ENCODE measurements at regions of chr10 and their contacts with region 1.

Region 1: DNA sequence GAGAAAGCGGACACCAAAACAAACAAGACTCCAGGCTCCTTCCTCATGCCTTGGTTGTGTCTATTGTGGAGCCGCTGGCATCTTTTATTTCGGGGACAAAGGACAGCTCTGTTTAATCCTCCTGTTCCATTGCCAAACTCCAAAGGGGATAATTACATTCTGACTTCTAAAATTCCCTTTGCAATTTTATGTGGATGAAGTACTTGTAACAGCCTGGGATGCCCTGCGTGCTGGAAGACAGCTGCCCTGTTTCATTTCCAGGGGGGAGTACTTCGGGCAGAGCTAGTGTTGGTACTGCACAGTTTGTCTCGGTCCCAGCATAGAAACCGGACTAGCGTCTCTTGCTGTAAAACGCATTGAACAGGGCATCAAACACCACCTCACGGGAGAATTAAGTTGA is 90.9 kb downstream of the BAMBI start:
- DNase-seq: peak in 3 of 10 donors; percentile 42 to 60 (median 46)
- H3K4me3 ChIP-seq: peak overlapping the region in 39 of 59 donors; percentile 1 to 51 (median 20)
- H3K27ac ChIP-seq: peak overlapping the region in 50 of 59 donors; percentile 1 to 86 (median 68)
- H3K27me3 ChIP-seq: no peaks in the 10 kb centered on the region
- CTCF ChIP-seq: peak in 2 of 56 donors; percentile 9 to 23

Region 2: DNA sequence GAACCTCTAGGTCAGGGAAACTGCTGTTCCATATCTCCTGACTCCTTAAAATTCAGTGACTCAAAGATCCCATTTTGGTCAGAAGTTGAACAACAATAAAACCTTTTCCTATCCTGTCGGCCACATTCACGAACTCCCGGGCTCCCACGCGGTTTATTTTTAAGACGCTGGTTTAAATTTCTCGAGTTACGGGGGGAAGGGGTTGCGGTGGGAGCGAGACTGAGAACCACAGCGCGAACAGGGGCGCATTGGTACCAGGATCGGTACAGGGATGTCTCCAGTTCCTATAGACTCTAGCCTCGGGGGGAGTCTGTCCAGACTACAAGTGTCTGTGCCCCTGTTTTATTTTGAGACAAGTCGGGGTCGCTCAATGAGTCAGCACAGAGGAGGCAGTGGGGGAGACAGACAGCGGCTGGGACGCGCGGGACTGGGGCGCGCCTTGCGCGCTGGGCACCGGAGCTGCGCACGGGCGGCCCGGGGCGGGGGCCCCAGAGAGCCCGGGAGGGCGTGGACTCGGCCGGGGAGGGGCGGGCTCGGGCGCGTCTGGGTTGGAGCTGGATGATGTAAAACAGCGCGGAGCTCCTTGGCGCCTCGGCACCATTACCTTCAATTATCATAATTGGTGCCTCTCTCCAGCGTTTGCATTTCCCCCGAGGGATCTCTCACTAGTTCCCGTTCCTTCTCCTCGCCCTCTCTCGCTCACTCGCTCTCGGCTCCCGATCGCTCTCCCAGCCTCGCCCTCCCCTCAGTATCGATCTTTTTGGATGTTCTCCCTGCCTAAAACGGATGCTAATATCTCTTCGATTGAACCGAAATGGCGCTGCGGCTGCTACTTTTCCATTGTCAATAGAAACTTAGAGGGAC is 99.6 kb before region 1 on chr10:
- intact Hi-C with region 1: no loop called
- DNase-seq: no peak
- H3K4me3 ChIP-seq: peak overlapping the region; percentile 16 to 71 (median 51)
- H3K27ac ChIP-seq: no peak overlapping the region
- H3K27me3 ChIP-seq: peaks cover 0 to 63% (median 35%) of the 10 kb centered on the region in 45 donors
- CTCF ChIP-seq: no peak

Region 3: DNA sequence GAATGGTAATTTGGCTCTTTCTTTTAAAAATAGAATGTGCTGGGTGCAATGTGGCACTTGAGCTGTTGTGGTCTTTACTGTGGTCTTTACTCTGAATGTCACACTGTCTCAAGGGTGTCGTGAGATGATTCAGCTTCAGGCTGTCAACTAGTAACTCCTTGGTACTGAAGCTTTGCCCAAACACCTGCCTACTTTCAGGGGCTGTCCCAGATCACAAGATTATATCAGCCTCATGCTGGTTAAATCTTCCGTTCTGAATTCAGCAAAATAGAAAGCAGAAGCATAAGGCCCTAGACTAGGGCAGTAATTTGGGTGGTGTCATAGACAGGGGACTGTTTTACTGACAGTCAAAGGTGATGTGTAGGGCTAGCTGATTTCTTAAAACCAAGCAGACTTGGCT is 20.0 kb after region 1 on chr10:
- intact Hi-C with region 1: loop called in 1 of 2 experiments (anchors 1 kb)
- DNase-seq: no peak
- H3K4me3 ChIP-seq: peak overlapping the region in 6 of 59 donors; percentile 34 to 53 (median 40)
- H3K27ac ChIP-seq: peak overlapping the region in 58 of 59 donors; percentile 54 to 99 (median 91)
- H3K27me3 ChIP-seq: no peaks in the 10 kb centered on the region
- CTCF ChIP-seq: no peak

Region 4: GRCh38 chr10:29174335-29174734 is 406.1 kb after region 1 on chr10:
- intact Hi-C with region 1: no loop called
- DNase-seq: no peak
- H3K4me3 ChIP-seq: no peak overlapping the region
- H3K27ac ChIP-seq: no peak overlapping the region
- H3K27me3 ChIP-seq: peaks cover 0 to 22% (median 0%) of the 10 kb centered on the region in 45 donors
- CTCF ChIP-seq: no peak